ENCODE measurements at regions of chr19 and their contacts with region 1.

Region 1: GRCh38 chr19:54189735-54190502 is 539 bp upstream of the MBOAT7 start:
- DNase-seq: peak; percentile 100
- H3K4me3 ChIP-seq: peak overlapping the region; percentile 81 to 85
- H3K27ac ChIP-seq: peak overlapping the region; percentile 100
- H3K4me1 ChIP-seq: peaks cover 6 to 20% of the 10 kb centered on the region in 2 donors
- H3K27me3 ChIP-seq: no peaks in the 10 kb centered on the region
- CTCF ChIP-seq: no peak

Region 2: DNA sequence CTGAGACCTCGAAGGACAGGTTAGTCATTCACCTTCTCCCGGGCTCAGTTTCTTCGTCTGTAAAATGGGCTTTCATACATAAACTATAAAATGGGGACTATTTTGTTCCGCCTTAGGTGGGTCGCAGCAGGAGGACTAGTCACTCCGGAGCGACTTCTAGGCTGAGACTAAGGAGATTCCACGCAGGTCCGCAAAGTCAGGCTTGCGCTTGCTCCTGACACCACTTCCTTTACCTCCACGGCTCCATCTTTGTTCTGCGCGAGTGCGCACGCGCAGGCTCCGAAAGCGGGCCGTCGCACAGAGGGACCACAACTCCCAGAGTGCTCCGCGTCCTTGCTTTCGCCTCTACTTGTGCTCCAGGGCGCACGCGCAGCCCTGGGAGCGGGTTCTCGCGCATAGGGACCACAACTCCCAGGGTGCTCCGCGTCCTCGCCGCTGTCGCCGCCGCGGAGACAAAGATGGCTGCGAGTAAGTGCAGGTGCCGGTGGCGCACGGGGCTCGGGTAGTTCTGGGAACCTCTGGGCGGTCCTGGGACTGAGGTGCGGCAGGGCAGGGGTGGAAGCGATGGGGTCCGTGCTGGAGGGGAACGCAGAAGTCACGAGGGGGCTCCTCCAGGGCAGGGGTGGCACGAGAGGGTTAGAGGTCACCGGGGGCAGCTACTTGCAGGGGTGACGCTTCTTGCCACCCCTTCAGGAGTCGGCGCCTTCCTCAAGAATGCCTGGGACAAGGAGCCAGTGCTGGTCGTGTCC is 87.3 kb before region 1 on chr19 and contains the start of gene NDUFA3:
- intact Hi-C with region 1: loop called (anchors 1 kb)
- DNase-seq: peak; percentile 97 to 99
- H3K4me3 ChIP-seq: peak within 1 kb of the TSS; percentile 72 to 83
- H3K27ac ChIP-seq: peak within 1 kb of the TSS in 1 of 2 donors; percentile 67
- H3K4me1 ChIP-seq: peaks cover 0 to 7% of the 10 kb centered on the region in 2 donors
- H3K27me3 ChIP-seq: no peaks in the 10 kb centered on the region
- CTCF ChIP-seq: no peak
- total RNA-seq, gene NDUFA3: 12.5 TPM

Region 3: GRCh38 chr19:54159352-54160181 is 30.4 kb before region 1 on chr19 and contains the start of gene LENG1:
- intact Hi-C with region 1: loop called (anchors 1 kb)
- DNase-seq: peak; percentile 100
- H3K4me3 ChIP-seq: peak within 1 kb of the TSS; percentile 65 to 83
- H3K27ac ChIP-seq: peak within 1 kb of the TSS; percentile 89 to 93
- H3K4me1 ChIP-seq: peaks cover 15 to 21% of the 10 kb centered on the region in 2 donors
- H3K27me3 ChIP-seq: peaks cover 4% of the 10 kb centered on the region
- CTCF ChIP-seq: peak; percentile 28 to 49 (median 36)
- total RNA-seq, gene LENG1: 2.7 TPM

Region 4: DNA sequence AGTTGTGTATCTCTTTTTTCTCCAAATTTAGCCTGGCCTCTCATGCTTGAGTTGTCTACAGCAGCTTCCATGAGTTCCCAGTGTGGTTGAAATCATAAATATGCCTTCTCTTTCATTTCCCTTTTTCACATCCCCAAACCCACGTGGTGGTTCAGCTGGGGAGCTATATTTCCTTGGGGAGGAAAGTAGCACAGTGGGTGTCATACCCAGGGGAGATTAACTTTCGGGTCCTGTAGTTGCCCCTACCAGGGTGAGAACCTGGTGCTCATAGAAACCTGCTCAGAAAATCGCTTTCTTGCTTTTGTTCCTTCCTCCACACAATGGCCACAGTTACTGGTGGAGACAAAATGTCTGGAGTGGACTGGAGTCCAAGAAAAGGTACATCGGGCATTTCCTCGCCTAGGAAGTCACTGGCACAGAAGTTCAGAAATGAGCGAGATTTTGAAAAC is 156.0 kb after region 1 on chr19:
- intact Hi-C with region 1: no loop called
- DNase-seq: no peak
- H3K4me3 ChIP-seq: no peak overlapping the region
- H3K27ac ChIP-seq: no peak overlapping the region
- H3K4me1 ChIP-seq: no peaks in the 10 kb centered on the region
- H3K27me3 ChIP-seq: no peaks in the 10 kb centered on the region
- CTCF ChIP-seq: no peak

Region 5: DNA sequence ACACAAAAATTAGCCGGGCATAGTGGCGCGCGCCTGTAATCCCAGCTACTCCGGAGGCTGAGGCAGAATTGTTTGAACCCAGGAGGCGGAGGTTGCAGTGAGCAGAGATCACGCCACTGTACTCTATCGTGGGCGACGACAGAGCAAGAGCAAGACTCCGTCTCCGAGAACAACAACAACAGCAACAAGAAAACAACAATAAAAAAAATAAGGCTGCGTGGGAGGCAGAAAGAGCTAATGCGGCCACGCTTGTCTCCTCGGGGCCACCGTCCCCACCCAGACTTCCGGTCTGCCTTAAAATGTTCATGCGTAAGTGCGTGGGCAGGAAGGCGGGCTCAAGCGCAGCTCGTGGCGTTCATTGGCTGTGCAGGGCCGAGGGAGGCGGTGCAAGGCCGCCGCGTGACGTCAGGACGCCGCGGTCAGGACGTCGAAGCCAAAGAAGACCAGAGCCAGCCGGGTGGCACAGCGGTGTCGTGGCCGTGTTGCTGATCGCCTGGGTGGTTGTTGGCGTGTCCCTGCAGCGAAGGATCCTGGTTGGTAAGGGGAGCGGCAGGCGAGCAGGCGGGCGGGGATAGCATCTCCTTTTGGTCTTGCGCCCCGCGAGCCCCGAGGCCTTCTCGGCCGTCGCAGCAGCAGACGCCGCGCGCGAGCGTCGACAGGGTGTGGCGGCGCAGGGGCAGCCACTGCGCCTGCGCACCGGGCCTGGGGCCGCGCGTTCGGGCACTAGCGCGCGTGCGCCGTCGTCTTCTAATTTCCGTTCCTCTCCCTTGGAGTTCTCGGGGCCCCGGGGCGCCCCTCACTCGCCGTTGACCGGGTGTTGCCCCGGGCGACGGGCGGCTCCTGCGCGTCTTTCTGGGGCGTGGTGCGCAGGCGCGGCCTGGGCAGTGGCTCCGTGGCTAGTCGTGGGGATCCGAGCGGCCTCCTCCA is 259.1 kb after region 1 on chr19 and contains the start of gene LENG8:
- intact Hi-C with region 1: loop called (anchors 1 kb)
- DNase-seq: peak; percentile 92 to 99
- H3K4me3 ChIP-seq: peak within 1 kb of the TSS; percentile 83 to 97
- H3K27ac ChIP-seq: peak within 1 kb of the TSS; percentile 86 to 97
- H3K4me1 ChIP-seq: peaks cover 11 to 39% of the 10 kb centered on the region in 2 donors
- H3K27me3 ChIP-seq: no peaks in the 10 kb centered on the region
- CTCF ChIP-seq: no peak
- total RNA-seq, gene LENG8: 402 TPM